Activated T-helper 1 cell treated with anti-CD3 and anti-CD28 coated beads, Interleukin-12 subunit alpha, Interleukin-12 subunit beta, Interleukin-2, Interleukin-4 antibody, amounts not matched to agents 30 ng/mL and 10 ng/mL and 1 ng/mL, durations not matched to agents 14 hours and 24 hours and 36 hours (primary cell): ENCODE measurements at regions of chr1 and their contacts with region 1.

Region 1: GRCh38 chr1:8987881-8988617 is 38.2 kb downstream of the SLC2A7 start:
- DNase-seq: peak; percentile 66
- H3K4me3 Mint-ChIP-seq: peak overlapping the region; percentile 53
- H3K27ac Mint-ChIP-seq: peak overlapping the region; percentile 92
- H3K4me1 Mint-ChIP-seq: peaks cover 68% of the 10 kb centered on the region
- H3K27me3 Mint-ChIP-seq: no peaks in the 10 kb centered on the region

Region 2: DNA sequence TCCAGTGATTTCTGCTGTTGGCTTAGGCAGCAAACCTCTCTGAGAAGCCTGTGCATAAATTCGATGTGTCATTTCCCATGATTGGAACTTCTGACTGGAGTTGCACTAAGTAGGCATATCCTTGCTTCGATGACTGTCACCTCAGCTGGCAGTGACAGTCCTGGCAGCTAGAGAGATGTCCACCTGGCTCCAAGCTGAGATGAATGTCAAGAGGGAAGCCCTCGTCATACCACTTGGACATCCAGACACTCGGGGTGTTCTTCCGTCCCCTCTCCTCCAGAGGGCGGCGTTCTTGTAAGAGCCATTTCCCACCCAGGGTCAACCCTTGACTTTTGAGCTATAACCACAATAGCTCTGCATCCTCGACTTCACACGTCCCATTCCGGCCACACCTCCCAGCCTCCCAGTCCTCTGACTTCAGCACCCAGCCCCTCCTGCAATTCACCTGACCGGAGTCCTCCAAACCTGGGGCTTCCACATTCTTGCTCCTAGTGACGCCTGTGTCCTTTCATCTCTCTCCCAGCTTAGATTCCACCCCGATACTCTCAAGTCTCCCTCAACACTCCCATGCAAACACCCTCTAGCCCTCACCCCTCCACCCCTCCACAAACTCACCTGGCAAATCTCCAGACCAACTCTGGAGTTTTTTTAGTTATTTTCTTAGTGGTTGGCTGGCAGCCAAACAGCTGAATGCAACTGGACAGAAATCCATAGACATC is 25.1 kb before region 1 on chr1:
- intact Hi-C with region 1: loop called (anchors 2 kb)
- DNase-seq: no peak
- H3K4me3 Mint-ChIP-seq: peak overlapping the region; percentile 49
- H3K27ac Mint-ChIP-seq: peak overlapping the region; percentile 74
- H3K4me1 Mint-ChIP-seq: peaks cover 85% of the 10 kb centered on the region
- H3K27me3 Mint-ChIP-seq: no peaks in the 10 kb centered on the region

Region 3: GRCh38 chr1:8970870-8971337 is 17.1 kb before region 1 on chr1:
- intact Hi-C with region 1: loop called (anchors 1 kb)
- DNase-seq: peak; percentile 53
- H3K4me3 Mint-ChIP-seq: peak overlapping the region; percentile 97
- H3K27ac Mint-ChIP-seq: peak overlapping the region; percentile 98
- H3K4me1 Mint-ChIP-seq: peaks cover 57% of the 10 kb centered on the region
- H3K27me3 Mint-ChIP-seq: no peaks in the 10 kb centered on the region

Region 4: GRCh38 chr1:9004700-9005394 is 16.8 kb after region 1 on chr1:
- intact Hi-C with region 1: loop called (anchors 1 kb)
- DNase-seq: peak; percentile 78
- H3K4me3 Mint-ChIP-seq: no peak overlapping the region
- H3K27ac Mint-ChIP-seq: no peak overlapping the region
- H3K4me1 Mint-ChIP-seq: peaks cover 6% of the 10 kb centered on the region
- H3K27me3 Mint-ChIP-seq: peaks cover 5% of the 10 kb centered on the region

Region 5: GRCh38 chr1:9730096-9730901 is 742.2 kb after region 1 on chr1:
- intact Hi-C with region 1: no loop called
- DNase-seq: no peak
- H3K4me3 Mint-ChIP-seq: peak overlapping the region; percentile 45
- H3K27ac Mint-ChIP-seq: peak overlapping the region; percentile 77
- H3K4me1 Mint-ChIP-seq: peaks cover 52% of the 10 kb centered on the region
- H3K27me3 Mint-ChIP-seq: no peaks in the 10 kb centered on the region